Dorsolateral prefrontal cortex (tissue), 120 donors: ENCODE measurements at regions of chr2 and their contacts with region 1.

Region 1: DNA sequence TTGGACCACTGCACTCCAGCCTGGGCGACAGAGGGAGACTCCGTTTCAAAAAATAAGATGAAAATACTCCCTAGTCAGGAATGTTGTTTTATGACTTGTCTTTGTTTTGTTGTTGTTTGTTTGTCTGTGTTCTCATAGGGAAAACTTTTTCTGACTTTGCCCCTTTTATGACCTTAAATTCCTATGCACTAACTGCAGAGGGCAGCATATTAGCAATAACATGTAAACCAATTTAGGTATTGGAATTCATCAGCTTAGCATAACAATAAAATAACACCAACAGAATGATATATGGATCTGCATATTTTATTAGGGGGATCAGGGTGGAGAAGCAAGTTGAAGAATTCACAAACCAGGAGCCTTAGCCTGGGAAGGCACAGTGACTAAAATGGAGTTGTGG is 631.5 kb downstream of the SUCLG1 start:
- DNase-seq: no peak
- H3K4me3 ChIP-seq: no peak overlapping the region
- H3K27ac ChIP-seq: no peak overlapping the region
- H3K27me3 ChIP-seq: peaks cover 0 to 7% (median 0%) of the 10 kb centered on the region in 45 donors
- CTCF ChIP-seq: peak in 13 of 56 donors; percentile 7 to 31 (median 17)

Region 2: GRCh38 chr2:84314901-84315330 is 487.3 kb after region 1 on chr2:
- intact Hi-C with region 1: loop called in 1 of 2 experiments (anchors 5 kb)
- DNase-seq: peak; percentile 45 to 91 (median 87)
- H3K4me3 ChIP-seq: no peak overlapping the region
- H3K27ac ChIP-seq: no peak overlapping the region
- H3K27me3 ChIP-seq: peaks cover 0 to 17% (median 0%) of the 10 kb centered on the region in 45 donors
- CTCF ChIP-seq: peak; percentile 63 to 97 (median 90)